Psoas muscle (tissue), 8 donors: ENCODE measurements at regions of chr16 and their contacts with region 1.

Region 1: GRCh38 chr16:84186685-84187437 is at the start of gene TAF1C:
- DNase-seq: peak; percentile 93 to 96
- ATAC-seq: peak; percentile 98 to 100 (median 99)
- H3K4me3 ChIP-seq: peak within 1 kb of the TSS; percentile 83
- H3K27ac ChIP-seq: peak within 1 kb of the TSS; percentile 77
- H3K4me1 ChIP-seq: peaks cover 11% of the 10 kb centered on the region
- H3K27me3 ChIP-seq: no peaks in the 10 kb centered on the region
- CTCF ChIP-seq: peak; percentile 92
- total RNA-seq, gene TAF1C: 8.3 to 22.3 (median 16.3) TPM

Region 2: DNA sequence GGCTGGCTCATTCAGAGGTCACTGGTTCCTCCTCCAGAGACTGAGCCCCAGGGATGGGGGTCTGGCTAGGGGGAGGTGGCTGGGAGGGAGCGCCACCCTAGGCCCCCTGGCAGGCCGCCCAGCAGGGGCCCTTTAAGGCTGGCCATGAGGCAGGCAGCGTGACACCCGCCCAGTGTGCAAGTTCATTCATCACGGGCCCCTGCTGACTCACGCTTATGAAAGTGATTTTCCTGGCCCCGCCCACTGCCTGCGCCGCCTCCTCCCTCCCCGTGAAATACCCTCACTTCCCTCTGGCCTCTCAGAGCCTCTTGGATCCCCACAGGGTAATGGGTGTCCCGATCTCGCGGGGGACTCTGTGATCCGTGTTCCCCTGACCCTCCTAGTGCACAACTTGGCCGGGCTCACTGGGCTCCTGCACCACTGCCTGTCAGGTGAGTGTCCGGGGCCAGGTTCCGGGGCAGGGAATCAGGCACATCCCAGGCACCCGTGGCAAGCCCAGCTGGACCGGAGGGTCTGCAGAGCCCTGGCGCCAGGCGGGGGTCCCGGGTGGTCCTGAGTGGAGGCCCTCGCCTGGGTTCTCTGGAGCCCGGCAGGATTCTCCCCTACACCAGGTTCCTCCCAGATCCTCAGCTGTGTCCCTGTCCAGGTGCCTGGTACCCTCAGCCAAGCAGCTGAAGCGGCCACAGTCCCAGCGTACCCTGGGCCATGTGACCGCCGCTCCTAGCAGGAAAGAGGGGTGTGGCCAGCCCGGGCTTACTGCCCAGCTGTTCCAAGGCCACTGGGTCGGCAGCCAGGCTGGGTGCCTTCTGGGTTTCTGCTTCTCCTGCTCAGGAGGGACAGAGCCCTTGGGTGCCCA is 233.7 kb before region 1 on chr16 and contains the start of gene OSGIN1:
- intact Hi-C with region 1: loop called in 1 of 2 experiments (anchors 10 kb)
- DNase-seq: peak; percentile 95 to 97
- ATAC-seq: peak; percentile 87 to 92 (median 90)
- H3K4me3 ChIP-seq: peak within 1 kb of the TSS; percentile 78
- H3K27ac ChIP-seq: peak within 1 kb of the TSS; percentile 96
- H3K4me1 ChIP-seq: peaks cover 29% of the 10 kb centered on the region
- H3K27me3 ChIP-seq: no peaks in the 10 kb centered on the region
- CTCF ChIP-seq: no peak
- total RNA-seq, gene OSGIN1: 10.4 to 33.7 (median 24.9) TPM

Region 3: DNA sequence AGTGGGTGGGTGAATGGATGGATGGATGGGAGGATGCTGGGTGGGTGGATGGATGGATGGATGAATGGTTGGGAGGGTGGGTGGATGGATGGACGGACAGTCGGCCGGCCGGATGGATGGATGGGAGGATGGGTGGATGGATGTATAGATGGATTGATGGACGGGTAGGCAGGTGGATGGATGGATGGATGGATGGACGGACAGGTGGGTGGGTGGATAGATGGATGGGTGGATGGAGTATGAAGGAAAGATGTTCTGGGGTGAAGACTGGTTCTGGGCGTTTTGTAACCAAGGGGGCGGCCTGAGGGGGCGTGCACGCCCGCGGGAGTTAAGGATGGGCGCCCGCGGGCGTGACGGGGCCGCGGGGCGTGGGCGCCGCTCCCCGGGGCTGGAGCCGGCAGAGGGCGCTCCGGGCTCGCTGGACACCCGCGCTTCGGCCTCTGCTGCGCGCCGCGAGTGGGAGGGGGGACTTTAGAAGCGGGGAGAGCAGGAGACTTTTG is 219.0 kb before region 1 on chr16 and contains the start of gene NECAB2:
- intact Hi-C with region 1: loop called in 1 of 2 experiments (anchors 10 kb)
- DNase-seq: peak; percentile 60 to 73
- ATAC-seq: peak in 3 of 4 donors; percentile 39 to 68 (median 65)
- H3K4me3 ChIP-seq: peak within 1 kb of the TSS; percentile 48
- H3K27ac ChIP-seq: no peak within 1 kb of the TSS
- H3K4me1 ChIP-seq: no peaks in the 10 kb centered on the region
- H3K27me3 ChIP-seq: no peaks in the 10 kb centered on the region
- CTCF ChIP-seq: peak; percentile 64
- total RNA-seq, gene NECAB2: not detected

Region 4: DNA sequence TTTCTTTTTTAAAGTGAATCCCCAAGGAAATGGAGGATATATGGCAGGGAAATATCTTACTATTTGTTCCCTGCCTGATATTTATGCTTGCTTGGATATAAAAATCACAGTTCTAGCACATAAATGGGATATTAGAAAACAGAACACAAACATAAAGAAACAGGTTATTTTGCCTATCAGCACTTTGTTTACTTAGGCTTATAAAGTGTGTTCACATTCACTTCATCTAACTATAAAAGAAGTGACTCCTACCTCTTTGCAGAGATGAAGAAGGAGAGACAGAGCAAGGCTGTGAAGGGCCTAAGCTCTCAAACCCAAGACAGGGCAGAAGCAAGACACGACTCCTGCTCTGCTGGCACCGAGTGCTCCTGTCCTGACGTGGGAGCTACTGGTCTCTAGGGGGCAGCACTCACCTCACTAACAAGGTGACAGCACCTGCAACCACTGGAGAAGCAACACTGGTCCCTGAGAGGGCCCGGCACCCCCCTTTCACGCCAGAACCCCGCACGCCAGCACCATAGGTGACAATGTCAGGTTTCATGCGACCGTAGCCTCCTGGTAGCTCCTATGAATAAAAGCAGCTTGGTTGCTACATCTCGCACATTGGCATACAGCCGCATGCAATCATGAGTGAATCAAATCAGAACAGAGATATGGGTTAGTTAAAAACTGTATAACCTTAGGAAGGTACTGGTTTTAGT is 102.1 kb before region 1 on chr16:
- intact Hi-C with region 1: loop called in 1 of 2 experiments (anchors 5 kb)
- DNase-seq: peak; percentile 41 to 72
- ATAC-seq: peak; percentile 59 to 83 (median 72)
- H3K4me3 ChIP-seq: no peak overlapping the region
- H3K27ac ChIP-seq: no peak overlapping the region
- H3K4me1 ChIP-seq: peaks cover 10% of the 10 kb centered on the region
- H3K27me3 ChIP-seq: no peaks in the 10 kb centered on the region
- CTCF ChIP-seq: peak; percentile 65

Region 5: DNA sequence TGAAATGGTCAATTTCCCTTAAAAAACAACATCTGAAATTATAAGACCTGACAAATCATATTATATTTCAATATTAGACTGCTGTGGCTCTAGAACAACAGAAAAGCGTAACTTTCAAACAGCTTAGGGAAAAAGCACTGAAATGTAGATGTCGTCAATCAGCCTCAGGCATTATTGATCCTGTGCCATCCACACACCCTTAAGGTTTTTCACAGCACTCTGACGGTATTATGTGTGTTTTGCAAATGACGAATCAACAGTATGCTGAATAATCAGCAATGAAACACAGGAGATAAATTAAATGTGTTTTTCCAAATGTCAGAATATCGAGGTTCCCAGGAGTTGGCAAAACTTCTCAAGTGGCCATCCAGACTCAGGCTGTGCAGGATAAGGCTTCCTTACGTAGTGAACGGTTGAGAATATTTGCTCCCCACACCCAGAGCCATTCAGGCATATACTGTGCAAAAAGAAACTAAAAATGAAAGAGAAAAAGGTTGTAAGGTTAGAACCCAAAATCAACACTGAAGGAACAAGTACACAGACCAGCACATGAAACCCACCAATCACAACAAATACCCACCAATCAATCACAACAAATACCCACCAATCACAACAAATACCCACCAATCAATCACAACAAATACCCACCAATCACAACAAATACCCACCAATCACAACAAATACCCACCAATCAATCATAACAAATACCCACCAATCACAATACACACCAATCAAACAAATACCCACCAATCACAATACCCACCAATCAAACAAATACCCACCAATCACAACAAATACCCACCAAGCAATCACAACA is 62.4 kb before region 1 on chr16:
- intact Hi-C with region 1: no loop called
- DNase-seq: no peak
- ATAC-seq: no peak
- H3K4me3 ChIP-seq: no peak overlapping the region
- H3K27ac ChIP-seq: no peak overlapping the region
- H3K4me1 ChIP-seq: no peaks in the 10 kb centered on the region
- H3K27me3 ChIP-seq: no peaks in the 10 kb centered on the region
- CTCF ChIP-seq: no peak